IMR-90 (cell line): ENCODE measurements at regions of chr19 and their contacts with region 1.

Region 1: GRCh38 chr19:913080-913748 is at the start of gene R3HDM4:
- DNase-seq: peak; percentile 37
- ATAC-seq: peak; percentile 93
- H3K4me3 ChIP-seq: peak within 1 kb of the TSS; percentile 100
- H3K27ac ChIP-seq: peak within 1 kb of the TSS; percentile 98
- H3K4me1 ChIP-seq: peaks cover 12% of the 10 kb centered on the region
- H3K27me3 ChIP-seq: peaks cover 12% of the 10 kb centered on the region
- CTCF ChIP-seq: no peak
- POLR2A ChIP-seq: peak; percentile 82
- RAD21 ChIP-seq: no peak
- total RNA-seq, gene R3HDM4: 8.9 and 9.0 TPM in 2 replicates

Region 2: GRCh38 chr19:869245-870177 is 43.7 kb before region 1 on chr19:
- CTCF ChIA-PET with region 1: no interaction called
- POLR2A ChIA-PET with region 1: no interaction called
- dilution Hi-C with region 1: no loop called
- in situ Hi-C with region 1: no loop called
- intact Hi-C with region 1: loop called (anchors 5 kb)
- DNase-seq: peak; percentile 96
- ATAC-seq: peak; percentile 81
- H3K4me3 ChIP-seq: no peak overlapping the region
- H3K27ac ChIP-seq: peak overlapping the region; percentile 73
- H3K4me1 ChIP-seq: peaks cover 22% of the 10 kb centered on the region
- H3K27me3 ChIP-seq: no peaks in the 10 kb centered on the region
- CTCF ChIP-seq: no peak
- POLR2A ChIP-seq: no peak
- RAD21 ChIP-seq: no peak

Region 3: GRCh38 chr19:1026189-1027019 is 113.2 kb after region 1 on chr19 and contains the start of gene CNN2:
- CTCF ChIA-PET with region 1: no interaction called
- POLR2A ChIA-PET with region 1: interaction called, 10 read pairs
- dilution Hi-C with region 1: no loop called
- in situ Hi-C with region 1: no loop called
- intact Hi-C with region 1: no loop called
- DNase-seq: peak; percentile 67
- ATAC-seq: peak; percentile 80
- H3K4me3 ChIP-seq: peak within 1 kb of the TSS; percentile 93
- H3K27ac ChIP-seq: peak within 1 kb of the TSS; percentile 100
- H3K4me1 ChIP-seq: peaks cover 16% of the 10 kb centered on the region
- H3K27me3 ChIP-seq: no peaks in the 10 kb centered on the region
- CTCF ChIP-seq: no peak
- POLR2A ChIP-seq: peak; percentile 76
- RAD21 ChIP-seq: no peak
- total RNA-seq, gene CNN2: 270 and 272 TPM in 2 replicates